MCF 10A (cell line): ENCODE measurements at regions of chr5 and their contacts with region 1.

Region 1: DNA sequence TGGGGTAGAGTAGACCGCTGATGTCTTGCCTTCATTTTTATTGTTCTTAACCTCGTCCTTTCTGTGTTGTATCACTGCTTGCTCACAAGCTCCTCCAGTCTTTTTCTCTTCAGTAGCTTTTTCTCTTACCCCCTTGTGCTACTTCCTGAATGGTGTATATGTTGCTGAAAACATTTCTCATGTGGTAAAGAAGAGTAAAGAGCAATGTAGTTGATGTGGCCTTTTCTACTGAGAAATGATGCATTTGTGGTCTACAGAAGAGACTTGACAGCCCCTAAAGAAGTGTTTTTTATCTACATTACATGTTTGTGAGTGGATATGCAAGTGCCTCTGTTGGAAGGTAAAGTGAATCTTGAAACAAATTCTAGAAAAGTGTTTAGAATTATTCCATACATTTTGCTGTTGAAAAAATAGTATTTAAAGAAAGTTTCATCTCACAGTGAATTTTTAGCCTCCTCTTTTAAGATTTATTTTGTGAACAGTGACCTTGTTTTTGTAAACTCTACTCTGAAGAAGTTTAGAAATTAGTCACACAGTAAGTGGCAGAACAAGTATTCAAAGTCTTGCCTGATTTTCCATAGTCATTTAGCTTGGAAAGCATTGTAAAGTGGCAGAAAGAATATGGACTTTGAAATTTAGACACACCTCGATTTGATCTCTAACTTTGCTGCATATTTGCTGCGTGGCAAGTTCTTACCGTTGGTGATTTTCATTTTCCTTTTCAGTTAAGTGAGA is 17.4 kb downstream of the CDC42SE2 start:
- DNase-seq: peak; percentile 34
- H3K4me3 Mint-ChIP-seq: peak overlapping the region; percentile 51
- H3K27ac Mint-ChIP-seq: peak overlapping the region; percentile 84
- H3K4me1 Mint-ChIP-seq: peaks cover 33% of the 10 kb centered on the region
- H3K27me3 Mint-ChIP-seq: no peaks in the 10 kb centered on the region
- CTCF ChIP-seq: no peak

Region 2: DNA sequence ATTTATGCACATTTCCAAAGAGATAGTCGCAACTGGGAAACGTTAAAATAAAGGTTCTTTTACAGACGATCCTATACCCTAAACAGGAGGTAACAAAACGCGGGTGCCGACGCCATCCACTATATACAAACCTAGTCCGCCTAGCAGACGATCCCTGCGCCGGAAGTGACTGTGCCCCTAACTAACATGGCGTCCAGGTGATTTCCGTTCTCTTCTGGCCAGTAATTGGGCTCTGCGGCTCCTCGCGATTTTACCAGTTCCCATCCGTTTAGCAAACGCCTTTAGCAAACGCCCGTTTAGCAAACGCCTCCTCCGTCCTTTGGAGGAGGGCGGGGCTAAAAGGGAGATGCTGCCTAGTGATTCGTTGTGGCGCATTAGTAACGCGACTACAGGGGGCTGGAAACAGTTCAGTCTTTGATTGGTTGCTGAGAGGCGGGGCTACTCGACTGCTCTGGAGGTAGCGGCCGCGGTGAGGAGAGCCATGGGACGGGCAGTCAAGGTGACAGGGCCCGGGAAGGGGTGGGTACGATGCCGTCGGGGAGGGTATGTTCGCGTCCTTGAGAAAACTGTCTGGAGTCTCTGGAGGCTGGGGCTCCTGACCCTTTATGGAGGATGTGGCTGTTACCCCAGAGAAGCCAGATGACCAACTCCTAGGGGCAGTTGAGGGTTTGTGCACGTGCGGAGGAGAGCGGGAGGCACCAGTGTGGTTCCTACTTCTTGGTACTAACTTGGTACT is 110.6 kb before region 1 on chr5 and contains the start of gene LYRM7:
- CTCF ChIA-PET with region 1: interaction called, 4 read pairs
- POLR2A ChIA-PET with region 1: interaction called, 14 read pairs
- intact Hi-C with region 1: no loop called
- DNase-seq: peak; percentile 100
- H3K4me3 Mint-ChIP-seq: peak within 1 kb of the TSS; percentile 90
- H3K27ac Mint-ChIP-seq: peak within 1 kb of the TSS; percentile 90
- H3K4me1 Mint-ChIP-seq: peaks cover 4% of the 10 kb centered on the region
- H3K27me3 Mint-ChIP-seq: no peaks in the 10 kb centered on the region
- CTCF ChIP-seq: no peak
- total RNA-seq, gene LYRM7: 18.2 and 21.6 TPM in 2 replicates

Region 3: DNA sequence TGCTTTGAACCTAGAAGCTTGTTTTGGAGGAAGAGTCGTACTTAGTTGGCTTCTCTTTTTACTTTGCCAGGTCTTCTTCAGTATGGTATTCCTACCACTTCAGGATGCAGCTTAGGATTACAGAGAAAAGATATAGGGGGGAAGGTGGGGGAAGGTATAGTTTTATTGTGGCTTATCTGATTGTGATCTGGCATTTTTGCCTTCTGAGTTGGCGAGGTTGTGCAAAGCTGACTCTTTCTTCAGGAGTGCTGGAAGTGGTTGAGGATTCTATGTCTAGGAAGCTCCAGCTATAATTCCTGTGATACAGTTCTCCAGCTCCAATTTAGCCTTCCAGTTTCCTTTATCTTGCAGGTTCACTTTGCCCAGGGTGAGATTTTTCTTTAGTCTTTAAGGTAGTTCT is 10.5 kb before region 1 on chr5:
- CTCF ChIA-PET with region 1: interaction called, 11 read pairs
- POLR2A ChIA-PET with region 1: interaction called, 279 read pairs
- intact Hi-C with region 1: no loop called
- DNase-seq: peak; percentile 57
- H3K4me3 Mint-ChIP-seq: peak overlapping the region; percentile 13
- H3K27ac Mint-ChIP-seq: peak overlapping the region; percentile 33
- H3K4me1 Mint-ChIP-seq: peaks cover 47% of the 10 kb centered on the region
- H3K27me3 Mint-ChIP-seq: no peaks in the 10 kb centered on the region
- CTCF ChIP-seq: no peak

Region 4: GRCh38 chr5:131303537-131303936 is 22.2 kb after region 1 on chr5:
- CTCF ChIA-PET with region 1: interaction called, 3 read pairs
- POLR2A ChIA-PET with region 1: interaction called, 43 read pairs
- intact Hi-C with region 1: no loop called
- DNase-seq: peak; percentile 83
- H3K4me3 Mint-ChIP-seq: peak overlapping the region; percentile 10
- H3K27ac Mint-ChIP-seq: peak overlapping the region; percentile 97
- H3K4me1 Mint-ChIP-seq: peaks cover 67% of the 10 kb centered on the region
- H3K27me3 Mint-ChIP-seq: no peaks in the 10 kb centered on the region
- CTCF ChIP-seq: no peak